GM10248 (cell line): ENCODE measurements at regions of chr18 and their contacts with region 1.

Region 1: GRCh38 chr18:49834258-49834657 is 20.9 kb upstream of the ACAA2 start:
- DNase-seq: no peak
- CTCF ChIP-seq: no peak

Region 2: DNA sequence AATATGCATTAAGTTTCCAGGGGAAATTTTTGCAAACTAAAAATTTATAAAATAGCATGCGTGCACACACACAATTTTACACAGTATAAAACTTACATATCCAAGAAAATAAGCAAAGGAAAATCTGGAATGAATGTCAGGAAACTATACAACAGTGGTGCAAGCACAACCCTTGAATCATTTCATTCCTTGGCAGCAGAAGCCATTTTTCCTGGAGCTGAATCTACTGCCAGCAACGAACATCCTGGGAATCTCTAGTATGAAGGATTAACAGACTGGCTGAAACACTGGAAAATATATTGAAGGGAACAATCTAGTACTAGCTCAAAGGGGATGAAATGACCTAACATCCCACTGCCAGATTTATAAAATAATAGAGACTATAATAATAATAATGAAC is 609.1 kb before region 1 on chr18:
- CTCF ChIA-PET with region 1: no interaction called
- POLR2A ChIA-PET with region 1: no interaction called
- DNase-seq: no peak
- CTCF ChIP-seq: no peak

Region 3: GRCh38 chr18:50014606-50015005 is 180.3 kb after region 1 on chr18:
- CTCF ChIA-PET with region 1: no interaction called
- POLR2A ChIA-PET with region 1: interaction called, 11 read pairs
- DNase-seq: no peak
- CTCF ChIP-seq: no peak